Mammary epithelial cell (primary cell): ENCODE measurements at regions of chr16 and their contacts with region 1.

Region 1: DNA sequence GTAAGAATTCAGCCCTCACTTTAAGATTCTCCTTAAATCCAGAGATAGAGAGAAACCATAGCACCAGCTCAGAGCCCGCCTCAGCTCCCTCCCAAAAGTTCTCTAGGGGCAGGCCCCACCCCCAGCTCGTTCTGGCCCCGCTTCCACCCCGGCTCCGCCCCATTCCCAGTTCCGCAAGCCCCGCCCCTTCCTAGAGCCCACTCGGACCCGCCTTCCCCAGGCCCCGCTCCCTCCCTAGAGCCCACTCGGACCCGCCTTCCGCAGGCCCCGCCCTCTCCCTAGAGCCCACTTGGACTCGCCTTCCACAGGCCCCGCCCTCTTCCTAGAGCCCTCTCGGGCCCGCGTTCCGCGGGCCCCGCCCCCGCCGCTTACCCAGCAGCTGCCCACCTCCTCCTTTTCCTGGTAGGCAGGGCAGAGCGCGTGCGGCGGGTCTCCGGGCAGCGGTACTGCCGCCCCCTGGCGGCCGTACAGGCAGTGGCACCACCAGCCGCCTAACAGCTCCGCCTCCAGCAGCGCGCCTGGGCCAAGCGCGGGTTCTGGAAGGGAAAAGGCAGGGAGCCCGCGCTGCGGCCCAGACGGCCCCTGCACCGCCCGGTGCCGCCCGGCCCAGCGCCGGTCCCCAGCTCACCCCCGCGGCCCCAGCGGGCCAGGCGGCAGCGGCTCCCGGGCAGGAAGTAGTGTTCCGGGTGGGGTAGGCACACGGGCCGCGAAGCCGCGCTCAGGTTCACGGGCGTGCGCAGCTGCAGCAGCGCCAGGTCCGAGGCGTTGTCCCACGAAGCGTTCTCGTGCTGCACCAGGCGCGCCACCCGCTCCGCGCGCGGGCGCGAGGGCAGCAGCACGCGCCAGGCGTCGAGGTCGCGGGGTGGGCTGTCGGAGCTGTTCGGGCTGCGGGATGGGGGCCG is 6.8 kb upstream of the PRSS8 start:
- DNase-seq: peak; percentile 98
- H3K4me3 ChIP-seq: peak overlapping the region; percentile 15 to 40 (median 37)
- H3K27ac ChIP-seq: peak overlapping the region; percentile 55
- H3K4me1 ChIP-seq: peaks cover 38% of the 10 kb centered on the region
- H3K27me3 ChIP-seq: no peaks in the 10 kb centered on the region
- CTCF ChIP-seq: peak; percentile 78 to 96

Region 2: GRCh38 chr16:30997000-30997886 is 145.1 kb before region 1 on chr16:
- CTCF ChIA-PET with region 1: interaction called, 27 read pairs
- dilution Hi-C with region 1: no loop called
- in situ Hi-C with region 1: loop called in 1 of 2 experiments (anchors 25 kb)
- intact Hi-C with region 1: no loop called
- DNase-seq: peak; percentile 72
- H3K4me3 ChIP-seq: peak overlapping the region; percentile 51 to 68 (median 60)
- H3K27ac ChIP-seq: peak overlapping the region; percentile 85
- H3K4me1 ChIP-seq: peaks cover 36% of the 10 kb centered on the region
- H3K27me3 ChIP-seq: no peaks in the 10 kb centered on the region
- CTCF ChIP-seq: no peak

Region 3: GRCh38 chr16:31052124-31052523 is 90.2 kb before region 1 on chr16:
- CTCF ChIA-PET with region 1: no interaction called
- dilution Hi-C with region 1: loop called (anchors 5 kb)
- in situ Hi-C with region 1: no loop called
- intact Hi-C with region 1: loop called (anchors 5 kb)
- DNase-seq: peak; percentile 96
- H3K4me3 ChIP-seq: no peak overlapping the region
- H3K27ac ChIP-seq: peak overlapping the region; percentile 42
- H3K4me1 ChIP-seq: peaks cover 6% of the 10 kb centered on the region
- H3K27me3 ChIP-seq: no peaks in the 10 kb centered on the region
- CTCF ChIP-seq: no peak

Region 4: DNA sequence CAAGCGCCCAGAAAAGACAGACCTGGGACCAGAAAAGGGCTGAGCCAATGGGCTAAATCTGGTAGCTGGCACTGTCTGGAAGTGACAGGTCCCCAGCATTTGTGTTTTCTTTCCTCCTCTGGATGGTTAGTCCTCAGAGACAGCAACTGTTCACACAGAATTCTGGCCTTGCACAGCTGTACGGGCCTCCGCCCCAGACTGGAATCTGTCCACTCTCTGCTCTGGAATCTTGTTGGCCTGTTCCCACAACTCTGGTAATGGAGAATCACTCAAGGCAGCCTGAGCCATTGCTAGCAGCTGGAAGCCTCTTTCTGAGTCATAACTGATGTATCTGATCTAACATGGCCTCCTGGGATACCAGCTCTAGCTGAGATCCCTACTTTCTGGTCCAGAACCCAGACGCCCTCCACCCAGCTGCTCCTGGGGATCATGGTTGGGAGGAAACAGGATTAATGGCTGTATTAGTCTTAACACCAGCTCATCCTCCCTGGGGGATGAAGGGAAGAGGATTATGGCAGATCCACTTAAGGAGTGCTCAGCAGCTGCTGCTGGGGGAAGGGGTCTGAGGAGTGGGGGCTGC is 77.4 kb before region 1 on chr16:
- CTCF ChIA-PET with region 1: no interaction called
- dilution Hi-C with region 1: no loop called
- in situ Hi-C with region 1: no loop called
- intact Hi-C with region 1: no loop called
- DNase-seq: peak; percentile 79
- H3K4me3 ChIP-seq: no peak overlapping the region
- H3K27ac ChIP-seq: peak overlapping the region; percentile 65
- H3K4me1 ChIP-seq: peaks cover 18% of the 10 kb centered on the region
- H3K27me3 ChIP-seq: no peaks in the 10 kb centered on the region
- CTCF ChIP-seq: no peak

Region 5: GRCh38 chr16:31108035-31108793 is 34.1 kb before region 1 on chr16 and contains the start of gene BCKDK:
- CTCF ChIA-PET with region 1: no interaction called
- dilution Hi-C with region 1: no loop called
- in situ Hi-C with region 1: no loop called
- intact Hi-C with region 1: loop called (anchors 2 kb)
- DNase-seq: peak; percentile 57
- H3K4me3 ChIP-seq: peak within 1 kb of the TSS; percentile 80 to 89 (median 81)
- H3K27ac ChIP-seq: peak within 1 kb of the TSS; percentile 30
- H3K4me1 ChIP-seq: peaks cover 10% of the 10 kb centered on the region
- H3K27me3 ChIP-seq: no peaks in the 10 kb centered on the region
- CTCF ChIP-seq: no peak
- total RNA-seq, gene BCKDK: 26.3 to 47.8 TPM

Region 6: DNA sequence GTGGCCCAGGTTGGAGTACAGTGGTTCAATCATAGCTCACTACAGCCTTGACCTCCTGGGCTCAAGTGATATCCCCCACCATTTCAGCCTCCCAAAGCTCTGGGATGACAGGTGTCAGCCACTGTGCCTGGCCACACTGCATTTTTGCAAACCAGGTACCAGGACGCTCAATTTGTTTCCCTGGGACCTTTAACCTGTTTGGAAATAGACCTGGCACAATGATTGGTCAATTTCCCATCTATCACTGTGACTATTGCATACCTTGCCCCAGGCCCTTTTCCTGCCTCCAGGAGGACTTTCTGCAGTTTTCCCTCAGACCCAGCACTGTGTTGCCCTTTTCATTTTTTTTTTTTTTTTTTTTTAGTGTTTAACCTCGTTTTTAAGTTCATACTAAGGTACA is 26.5 kb after region 1 on chr16:
- CTCF ChIA-PET with region 1: no interaction called
- dilution Hi-C with region 1: no loop called
- in situ Hi-C with region 1: no loop called
- intact Hi-C with region 1: no loop called
- DNase-seq: no peak
- H3K4me3 ChIP-seq: no peak overlapping the region
- H3K27ac ChIP-seq: no peak overlapping the region
- H3K4me1 ChIP-seq: no peaks in the 10 kb centered on the region
- H3K27me3 ChIP-seq: no peaks in the 10 kb centered on the region
- CTCF ChIP-seq: no peak

Region 7: DNA sequence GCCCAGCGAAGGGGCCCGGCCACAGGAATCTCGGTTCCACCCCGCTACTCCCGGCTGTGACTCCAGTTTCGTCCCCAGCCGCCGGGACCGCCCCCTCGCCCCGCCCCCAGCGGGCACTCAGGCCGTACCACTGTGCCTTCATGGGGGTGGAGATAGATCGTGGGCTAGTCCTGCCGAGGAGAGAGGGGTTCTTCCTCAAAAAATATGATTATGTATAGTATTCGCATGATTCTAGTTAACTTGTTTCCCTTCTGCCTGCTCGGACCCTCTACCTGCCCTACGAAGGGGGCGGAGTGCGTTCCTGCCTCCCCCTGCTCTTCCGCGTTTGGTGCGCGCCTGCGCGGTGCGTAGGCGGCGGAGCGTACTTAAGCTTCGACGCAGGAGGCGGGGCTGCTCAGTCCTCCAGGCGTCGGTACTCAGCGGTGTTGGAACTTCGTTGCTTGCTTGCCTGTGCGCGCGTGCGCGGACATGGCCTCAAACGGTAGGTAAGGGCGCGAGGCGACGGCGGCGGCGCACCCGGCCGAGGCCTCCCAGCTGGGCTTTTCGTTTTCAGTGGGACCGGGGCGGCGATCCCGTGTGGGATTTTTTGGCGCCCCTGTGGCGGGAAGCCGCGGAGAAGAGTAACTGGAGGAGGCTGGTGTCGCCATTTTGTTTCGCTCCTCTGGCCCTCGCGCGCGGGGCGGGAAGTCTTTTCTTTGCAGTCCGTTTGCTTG is 37.5 kb after region 1 on chr16 and contains the start of gene FUS:
- CTCF ChIA-PET with region 1: no interaction called
- dilution Hi-C with region 1: no loop called
- in situ Hi-C with region 1: no loop called
- intact Hi-C with region 1: loop called (anchors 2 kb)
- DNase-seq: peak; percentile 79
- H3K4me3 ChIP-seq: peak within 1 kb of the TSS; percentile 62 to 95 (median 75)
- H3K27ac ChIP-seq: peak within 1 kb of the TSS; percentile 95
- H3K4me1 ChIP-seq: peaks cover 27% of the 10 kb centered on the region
- H3K27me3 ChIP-seq: no peaks in the 10 kb centered on the region
- CTCF ChIP-seq: no peak
- total RNA-seq, gene FUS: 19.5 to 404 TPM

Region 8: DNA sequence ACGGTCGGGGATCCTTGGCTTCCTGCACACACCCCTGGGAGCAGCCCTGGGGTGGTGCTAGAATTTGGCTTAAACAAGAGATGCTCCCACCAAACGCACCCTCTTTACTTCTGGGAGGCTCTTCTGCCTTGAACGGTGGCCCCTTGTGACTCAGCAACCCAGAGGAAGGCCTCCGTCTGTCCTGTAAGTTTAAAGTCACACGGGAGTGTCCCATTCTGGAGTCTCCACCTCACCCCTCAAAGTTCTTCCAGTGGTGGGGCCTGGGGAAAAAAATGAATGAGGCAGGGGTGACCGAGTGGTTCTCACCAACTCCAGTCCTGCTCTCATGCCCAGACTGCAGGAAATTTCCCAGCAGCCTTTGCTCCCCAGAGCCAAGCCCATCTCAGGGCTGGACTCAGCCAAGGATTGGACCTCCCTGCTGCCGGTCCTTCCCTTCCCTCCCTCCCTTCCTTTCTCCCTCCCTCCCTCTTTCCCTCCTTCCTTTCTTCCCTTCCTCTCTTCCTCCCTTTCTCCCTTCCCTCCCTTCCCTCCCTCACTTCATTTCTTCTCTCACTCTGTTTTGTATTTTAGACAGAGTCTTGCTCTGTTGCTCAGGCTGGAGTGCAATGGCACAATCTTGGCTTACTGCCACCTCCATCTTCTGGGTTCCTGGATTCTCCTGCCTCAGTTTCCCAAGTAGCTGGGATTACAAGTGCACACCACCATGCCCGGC is 262.1 kb after region 1 on chr16:
- CTCF ChIA-PET with region 1: no interaction called
- dilution Hi-C with region 1: no loop called
- in situ Hi-C with region 1: no loop called
- intact Hi-C with region 1: no loop called
- DNase-seq: no peak
- H3K4me3 ChIP-seq: no peak overlapping the region
- H3K27ac ChIP-seq: no peak overlapping the region
- H3K4me1 ChIP-seq: no peaks in the 10 kb centered on the region
- H3K27me3 ChIP-seq: no peaks in the 10 kb centered on the region
- CTCF ChIP-seq: no peak